Psoas muscle (tissue), 8 donors: ENCODE measurements at regions of chr15 and their contacts with region 1.

Region 1: DNA sequence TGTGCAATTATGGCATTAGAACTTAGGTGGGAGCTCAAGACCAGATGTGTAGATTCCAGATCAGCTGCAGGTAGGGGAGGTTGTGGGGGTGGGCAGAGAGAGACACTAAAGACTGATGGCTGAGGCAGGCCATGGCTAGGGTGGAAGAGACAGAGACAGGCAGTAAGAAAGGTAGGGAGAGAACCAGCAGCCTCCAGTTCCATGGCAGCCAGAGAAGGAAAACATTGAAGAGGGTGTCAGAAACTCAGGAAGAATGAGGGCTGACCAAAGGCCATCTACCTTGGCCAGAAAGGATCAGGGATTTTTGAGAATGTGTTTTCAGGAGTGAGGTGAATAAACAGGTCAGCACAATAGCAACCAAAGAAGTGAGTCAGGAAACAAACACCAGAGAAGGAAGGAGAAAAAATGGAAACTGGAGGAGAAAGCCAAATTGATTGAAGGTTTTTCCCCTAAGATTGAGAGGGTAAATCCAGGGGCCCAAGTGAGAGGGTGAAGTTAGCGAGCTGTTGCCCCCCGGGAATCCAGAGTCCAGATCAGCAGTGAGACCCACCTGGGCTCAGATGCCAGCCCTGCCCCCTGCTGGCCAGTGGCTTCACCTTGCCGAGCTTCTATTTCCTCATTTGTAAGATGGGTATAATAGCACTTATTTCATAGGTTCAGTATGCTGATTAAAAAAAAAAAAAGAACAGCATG is 41.0 kb downstream of the ABHD2 start:
- DNase-seq: peak in 1 of 2 donors; percentile 71
- ATAC-seq: peak in 3 of 4 donors; percentile 39 to 50 (median 44)
- H3K4me3 ChIP-seq: no peak overlapping the region
- H3K27ac ChIP-seq: peak overlapping the region; percentile 79
- H3K4me1 ChIP-seq: peaks cover 57% of the 10 kb centered on the region
- H3K27me3 ChIP-seq: no peaks in the 10 kb centered on the region
- CTCF ChIP-seq: peak; percentile 64

Region 2: GRCh38 chr15:88818920-88819319 is 310.3 kb before region 1 on chr15:
- intact Hi-C with region 1: no loop called
- DNase-seq: no peak
- ATAC-seq: no peak
- H3K4me3 ChIP-seq: no peak overlapping the region
- H3K27ac ChIP-seq: no peak overlapping the region
- H3K4me1 ChIP-seq: no peaks in the 10 kb centered on the region
- H3K27me3 ChIP-seq: no peaks in the 10 kb centered on the region
- CTCF ChIP-seq: no peak

Region 3: GRCh38 chr15:89057504-89058133 is 71.7 kb before region 1 on chr15:
- intact Hi-C with region 1: loop called in 1 of 2 experiments (anchors 5 kb)
- DNase-seq: peak; percentile 81 to 89
- ATAC-seq: peak; percentile 91 to 98 (median 93)
- H3K4me3 ChIP-seq: no peak overlapping the region
- H3K27ac ChIP-seq: no peak overlapping the region
- H3K4me1 ChIP-seq: peaks cover 2% of the 10 kb centered on the region
- H3K27me3 ChIP-seq: no peaks in the 10 kb centered on the region
- CTCF ChIP-seq: peak; percentile 99

Region 4: DNA sequence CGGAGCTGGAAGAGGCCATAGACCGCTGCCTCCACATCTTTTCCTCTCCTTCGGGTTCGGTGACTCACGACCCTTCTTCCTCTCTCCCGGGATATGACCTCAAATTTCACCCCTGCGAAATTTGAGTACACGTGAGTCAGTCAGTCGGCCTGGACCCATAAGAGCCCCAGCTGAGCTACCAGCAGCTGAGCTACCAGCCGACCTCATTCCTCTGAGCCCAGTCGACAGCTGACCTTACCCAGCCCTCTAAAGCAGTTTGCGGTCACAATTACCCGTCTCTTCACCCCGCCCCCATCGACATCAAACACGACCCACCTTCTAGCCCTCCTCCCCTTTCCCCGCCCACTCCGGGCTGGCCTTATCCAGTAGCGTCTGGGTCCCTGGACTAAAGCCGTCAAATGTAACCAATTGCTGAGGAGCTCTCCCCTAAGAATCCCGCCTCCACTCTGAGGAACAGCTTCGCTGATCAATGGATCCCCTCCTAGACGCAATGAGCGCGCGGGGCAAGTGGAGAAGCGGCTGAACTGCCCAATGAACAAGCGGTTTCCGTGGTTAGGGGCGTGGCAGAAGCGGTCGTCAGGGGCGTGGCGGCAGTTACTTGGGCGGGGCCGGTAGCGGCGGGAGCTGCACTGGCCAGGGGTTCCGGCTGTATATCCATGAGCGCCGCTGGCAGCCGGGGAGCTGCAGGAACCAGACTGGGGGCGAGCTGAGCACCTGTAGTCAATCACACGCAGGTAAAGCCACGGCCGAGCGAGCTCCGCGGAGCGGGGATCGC is 41.3 kb before region 1 on chr15 and contains the start of gene ABHD2:
- intact Hi-C with region 1: loop called (anchors 5 kb)
- DNase-seq: peak; percentile 99
- ATAC-seq: peak; percentile 84 to 86 (median 85)
- H3K4me3 ChIP-seq: peak within 1 kb of the TSS; percentile 97
- H3K27ac ChIP-seq: peak within 1 kb of the TSS; percentile 98
- H3K4me1 ChIP-seq: peaks cover 65% of the 10 kb centered on the region
- H3K27me3 ChIP-seq: no peaks in the 10 kb centered on the region
- CTCF ChIP-seq: no peak
- total RNA-seq, gene ABHD2: 66.1 to 215 (median 157) TPM

Region 5: GRCh38 chr15:89171136-89172072 is 42.1 kb after region 1 on chr15:
- intact Hi-C with region 1: loop called in 1 of 2 experiments (anchors 5 kb)
- DNase-seq: no peak
- ATAC-seq: no peak
- H3K4me3 ChIP-seq: no peak overlapping the region
- H3K27ac ChIP-seq: no peak overlapping the region
- H3K4me1 ChIP-seq: peaks cover 25% of the 10 kb centered on the region
- H3K27me3 ChIP-seq: no peaks in the 10 kb centered on the region
- CTCF ChIP-seq: peak; percentile 63

Region 6: GRCh38 chr15:89243691-89244471 is 114.6 kb after region 1 on chr15 and contains the start of gene FANCI:
- intact Hi-C with region 1: no loop called
- DNase-seq: peak; percentile 94 to 98
- ATAC-seq: peak; percentile 98 to 100 (median 100)
- H3K4me3 ChIP-seq: peak within 1 kb of the TSS; percentile 79
- H3K27ac ChIP-seq: no peak within 1 kb of the TSS
- H3K4me1 ChIP-seq: peaks cover 8% of the 10 kb centered on the region
- H3K27me3 ChIP-seq: no peaks in the 10 kb centered on the region
- CTCF ChIP-seq: peak; percentile 41
- total RNA-seq, gene FANCI: 0.69 to 2.3 (median 1.0) TPM